T-cell (primary cell): ENCODE measurements at regions of chr4 and their contacts with region 1.

Region 1: DNA sequence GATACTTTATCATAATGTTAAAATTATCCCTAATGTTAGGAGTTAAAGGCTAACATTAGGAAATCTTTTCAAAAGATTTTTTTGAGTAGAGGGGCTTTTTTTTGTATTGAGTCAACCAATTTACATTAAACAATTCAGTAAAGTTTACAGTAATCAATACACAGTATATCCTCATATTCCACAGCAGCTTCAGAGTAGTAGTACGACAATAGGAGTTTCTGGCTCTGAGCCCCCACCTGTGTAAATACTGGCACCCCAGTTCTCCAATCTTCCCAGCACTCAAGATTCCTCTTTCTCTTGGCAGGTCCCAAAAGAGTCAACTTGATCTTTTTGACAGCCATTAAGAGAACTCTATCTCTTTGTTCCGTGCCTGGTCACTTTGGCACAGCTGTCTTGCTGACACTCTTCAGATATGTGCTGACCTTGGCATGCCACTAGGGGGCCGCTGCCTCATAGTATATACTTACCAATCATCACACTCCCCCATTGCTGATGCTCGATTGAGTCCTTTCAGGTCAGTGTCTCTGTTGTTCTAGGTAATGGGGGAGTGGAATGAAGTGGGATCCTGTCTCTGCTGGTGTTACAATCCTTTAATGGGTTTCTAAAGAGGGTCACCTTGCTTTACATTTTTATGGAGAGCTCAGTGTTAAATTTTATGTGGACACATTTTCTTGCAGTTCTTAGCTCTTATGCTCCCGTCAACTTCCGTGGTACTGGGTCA is 19.5 kb upstream of the CCNI start:
- DNase-seq: peak; percentile 19 to 78 (median 63)
- ATAC-seq: peak; percentile 94 to 98 (median 96)
- H3K4me3 ChIP-seq: no peak overlapping the region
- H3K4me3 Mint-ChIP-seq: no peak overlapping the region
- H3K27ac ChIP-seq: no peak overlapping the region
- H3K27ac Mint-ChIP-seq: no peak overlapping the region
- H3K4me1 ChIP-seq: peaks cover 5 to 6% of the 10 kb centered on the region in 2 experiments
- H3K4me1 Mint-ChIP-seq: peaks cover 13 to 24% (median 21%) of the 10 kb centered on the region in 3 donors
- H3K27me3 ChIP-seq: no peaks in the 10 kb centered on the region
- H3K27me3 Mint-ChIP-seq: no peaks in the 10 kb centered on the region

Region 2: GRCh38 chr4:76266627-76267026 is 828.6 kb before region 1 on chr4:
- CTCF ChIA-PET with region 1: no interaction called
- POLR2A ChIA-PET with region 1: no interaction called
- DNase-seq: no peak
- ATAC-seq: no peak
- H3K4me3 ChIP-seq: no peak overlapping the region
- H3K4me3 Mint-ChIP-seq: no peak overlapping the region
- H3K27ac ChIP-seq: no peak overlapping the region
- H3K27ac Mint-ChIP-seq: no peak overlapping the region
- H3K4me1 ChIP-seq: no peaks in the 10 kb centered on the region
- H3K4me1 Mint-ChIP-seq: no peaks in the 10 kb centered on the region
- H3K27me3 ChIP-seq: no peaks in the 10 kb centered on the region
- H3K27me3 Mint-ChIP-seq: no peaks in the 10 kb centered on the region

Region 3: DNA sequence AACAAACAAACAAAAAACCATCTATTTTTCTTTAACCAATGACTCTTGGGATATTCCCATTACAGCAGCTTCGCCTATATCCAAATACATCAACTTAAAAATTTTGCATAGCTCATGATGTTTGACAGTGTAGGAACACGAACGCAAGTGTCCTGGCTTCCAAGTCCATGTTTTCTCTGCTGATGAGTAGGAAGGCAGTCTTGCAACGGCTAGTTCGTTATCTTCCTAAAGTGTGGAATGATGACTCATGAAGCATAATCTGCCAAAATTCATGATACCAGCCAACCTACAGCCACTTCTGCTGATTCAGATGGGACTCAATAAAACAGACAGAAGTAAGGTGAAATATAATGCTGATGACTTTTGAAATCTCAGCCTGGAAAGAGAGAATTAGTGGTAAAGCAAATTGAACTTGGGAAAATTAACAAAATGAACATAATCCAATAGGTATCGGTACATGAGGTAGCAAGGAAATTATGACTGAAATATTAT is 152.1 kb before region 1 on chr4:
- CTCF ChIA-PET with region 1: no interaction called
- POLR2A ChIA-PET with region 1: no interaction called
- DNase-seq: no peak
- ATAC-seq: no peak
- H3K4me3 ChIP-seq: no peak overlapping the region
- H3K4me3 Mint-ChIP-seq: no peak overlapping the region
- H3K27ac ChIP-seq: no peak overlapping the region
- H3K27ac Mint-ChIP-seq: no peak overlapping the region
- H3K4me1 ChIP-seq: peaks cover 0 to 2% of the 10 kb centered on the region in 2 experiments
- H3K4me1 Mint-ChIP-seq: no peaks in the 10 kb centered on the region
- H3K27me3 ChIP-seq: no peaks in the 10 kb centered on the region
- H3K27me3 Mint-ChIP-seq: no peaks in the 10 kb centered on the region

Region 4: GRCh38 chr4:77172336-77172735 is 77.1 kb after region 1 on chr4:
- CTCF ChIA-PET with region 1: no interaction called
- POLR2A ChIA-PET with region 1: no interaction called
- DNase-seq: no peak
- ATAC-seq: no peak
- H3K4me3 ChIP-seq: no peak overlapping the region
- H3K4me3 Mint-ChIP-seq: no peak overlapping the region
- H3K27ac ChIP-seq: no peak overlapping the region
- H3K27ac Mint-ChIP-seq: no peak overlapping the region
- H3K4me1 ChIP-seq: no peaks in the 10 kb centered on the region
- H3K4me1 Mint-ChIP-seq: peaks cover 0 to 6% (median 2%) of the 10 kb centered on the region in 3 donors
- H3K27me3 ChIP-seq: peaks cover 0 to 5% of the 10 kb centered on the region in 2 experiments
- H3K27me3 Mint-ChIP-seq: peaks cover 4 to 11% of the 10 kb centered on the region in 2 donors

Region 5: DNA sequence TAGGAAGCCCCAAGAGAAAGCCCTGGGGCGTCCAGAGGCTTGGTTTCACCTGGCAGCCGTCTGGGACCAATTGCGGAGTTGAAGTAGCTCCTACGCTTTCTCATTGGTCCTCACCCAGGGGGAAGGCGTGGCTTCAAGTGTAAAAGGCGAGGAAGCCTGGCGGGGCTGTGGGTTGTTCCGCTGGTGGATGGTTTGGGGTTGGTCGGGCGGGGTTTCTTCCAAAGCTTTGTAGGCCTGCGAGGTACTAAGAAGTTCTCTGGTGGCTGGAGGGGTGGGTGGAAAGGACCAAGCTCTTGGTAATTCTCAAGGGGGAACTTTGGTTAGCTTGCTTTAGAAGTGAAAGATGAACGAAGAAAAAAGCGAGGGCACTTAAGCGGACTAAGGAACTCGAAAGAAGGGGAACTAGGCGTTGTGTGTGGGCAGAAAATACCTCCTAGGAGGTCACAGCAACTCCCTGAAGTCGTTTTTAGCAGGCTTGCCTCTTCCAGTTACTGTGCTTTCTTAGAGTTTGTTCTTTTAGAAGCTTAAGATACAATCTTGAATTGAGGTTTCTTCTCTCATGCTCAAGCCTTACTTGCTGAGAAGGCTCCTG is 98.3 kb after region 1 on chr4:
- CTCF ChIA-PET with region 1: interaction called, 6 to 13 read pairs
- POLR2A ChIA-PET with region 1: no interaction called
- DNase-seq: peak; percentile 51 to 85 (median 71)
- ATAC-seq: peak; percentile 98 to 99 (median 98)
- H3K4me3 ChIP-seq: peak overlapping the region; percentile 38 to 45
- H3K4me3 Mint-ChIP-seq: peak overlapping the region; percentile 82 to 86 (median 85)
- H3K27ac ChIP-seq: peak overlapping the region; percentile 63
- H3K27ac Mint-ChIP-seq: peak overlapping the region; percentile 94 to 98
- H3K4me1 ChIP-seq: peaks cover 13 to 17% of the 10 kb centered on the region in 2 experiments
- H3K4me1 Mint-ChIP-seq: peaks cover 18 to 20% (median 20%) of the 10 kb centered on the region in 3 donors
- H3K27me3 ChIP-seq: no peaks in the 10 kb centered on the region
- H3K27me3 Mint-ChIP-seq: peaks cover 0 to 3% of the 10 kb centered on the region in 2 donors

Region 6: GRCh38 chr4:77203380-77204197 is 108.3 kb after region 1 on chr4:
- CTCF ChIA-PET with region 1: interaction called, 85 to 99 read pairs
- POLR2A ChIA-PET with region 1: no interaction called
- DNase-seq: peak; percentile 16 to 85 (median 54)
- ATAC-seq: peak; percentile 43 to 78 (median 71)
- H3K4me3 ChIP-seq: no peak overlapping the region
- H3K4me3 Mint-ChIP-seq: no peak overlapping the region
- H3K27ac ChIP-seq: no peak overlapping the region
- H3K27ac Mint-ChIP-seq: no peak overlapping the region
- H3K4me1 ChIP-seq: peaks cover 2 to 6% of the 10 kb centered on the region in 2 experiments
- H3K4me1 Mint-ChIP-seq: peaks cover 2 to 7% (median 6%) of the 10 kb centered on the region in 3 donors
- H3K27me3 ChIP-seq: no peaks in the 10 kb centered on the region
- H3K27me3 Mint-ChIP-seq: peaks cover 0 to 9% of the 10 kb centered on the region in 2 donors